Heart left ventricle (tissue), 16 donors: ENCODE measurements at regions of chr5 and their contacts with region 1.

Region 1: GRCh38 chr5:168879929-168880328 is 300.8 kb upstream of the PANK3 start:
- DNase-seq: peak in 2 of 5 donors; percentile 35 to 39
- ATAC-seq: peak in 3 of 4 donors; percentile 53 to 70 (median 59)
- H3K4me3 ChIP-seq: no peak overlapping the region
- H3K27ac ChIP-seq: peak overlapping the region in 4 of 12 donors; percentile 13 to 45 (median 32)
- H3K4me1 ChIP-seq: peaks cover 0 to 20% (median 3%) of the 10 kb centered on the region in 12 donors
- H3K27me3 ChIP-seq: no peaks in the 10 kb centered on the region
- CTCF ChIP-seq: no peak
- POLR2A ChIP-seq: no peak

Region 2: DNA sequence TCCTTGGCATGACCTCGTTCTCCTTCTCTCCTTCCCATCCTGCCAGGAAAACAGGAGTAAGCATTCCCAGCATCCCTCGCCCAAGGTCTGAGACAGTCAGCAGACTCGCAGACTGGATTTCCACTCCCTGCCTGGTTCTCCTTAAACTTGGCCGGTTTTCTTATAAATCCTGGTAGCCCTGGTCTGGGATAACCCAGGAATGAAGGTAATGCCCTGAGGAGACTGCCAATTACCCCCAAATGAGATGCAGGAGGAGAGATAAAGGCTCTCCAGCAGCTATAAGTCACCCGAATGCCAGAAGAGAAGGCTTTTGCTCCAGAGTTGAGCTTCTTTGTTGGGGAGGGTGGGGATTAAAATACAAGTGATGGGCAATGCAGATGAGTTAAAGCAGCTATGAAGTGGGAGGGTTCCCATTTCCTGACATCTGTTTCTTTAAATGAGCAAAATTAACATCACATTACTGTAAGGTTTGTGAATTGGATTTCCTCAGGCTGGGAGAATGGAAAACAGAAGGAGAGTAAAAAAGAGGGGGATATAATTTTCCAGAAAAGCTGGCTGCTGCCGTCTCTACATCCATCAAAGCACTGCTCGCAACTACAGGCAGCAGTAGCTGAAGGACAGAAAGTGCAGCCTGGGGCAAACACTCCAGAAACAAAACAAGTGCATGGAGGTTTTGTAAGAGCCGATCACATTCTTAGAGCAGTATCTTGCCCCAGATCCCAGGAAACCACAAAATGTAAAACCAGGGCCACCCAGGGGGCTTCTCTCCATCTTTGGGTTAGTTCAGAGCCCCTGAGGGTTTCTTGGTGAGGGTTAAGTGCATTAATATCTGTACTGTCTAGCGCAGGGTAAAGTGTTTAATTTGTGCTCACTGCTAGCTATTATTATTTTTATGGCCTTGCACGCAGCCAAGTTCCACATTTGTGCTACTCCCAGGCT is 123.2 kb before region 1 on chr5:
- intact Hi-C with region 1: loop called in 2 of 10 experiments (anchors 5 to 10 kb)
- DNase-seq: no peak
- ATAC-seq: no peak
- H3K4me3 ChIP-seq: no peak overlapping the region
- H3K27ac ChIP-seq: no peak overlapping the region
- H3K4me1 ChIP-seq: no peaks in the 10 kb centered on the region
- H3K27me3 ChIP-seq: no peaks in the 10 kb centered on the region
- CTCF ChIP-seq: no peak
- POLR2A ChIP-seq: no peak